Uterus (tissue), 4 donors: ENCODE measurements at regions of chr1 and their contacts with region 1.

Region 1: DNA sequence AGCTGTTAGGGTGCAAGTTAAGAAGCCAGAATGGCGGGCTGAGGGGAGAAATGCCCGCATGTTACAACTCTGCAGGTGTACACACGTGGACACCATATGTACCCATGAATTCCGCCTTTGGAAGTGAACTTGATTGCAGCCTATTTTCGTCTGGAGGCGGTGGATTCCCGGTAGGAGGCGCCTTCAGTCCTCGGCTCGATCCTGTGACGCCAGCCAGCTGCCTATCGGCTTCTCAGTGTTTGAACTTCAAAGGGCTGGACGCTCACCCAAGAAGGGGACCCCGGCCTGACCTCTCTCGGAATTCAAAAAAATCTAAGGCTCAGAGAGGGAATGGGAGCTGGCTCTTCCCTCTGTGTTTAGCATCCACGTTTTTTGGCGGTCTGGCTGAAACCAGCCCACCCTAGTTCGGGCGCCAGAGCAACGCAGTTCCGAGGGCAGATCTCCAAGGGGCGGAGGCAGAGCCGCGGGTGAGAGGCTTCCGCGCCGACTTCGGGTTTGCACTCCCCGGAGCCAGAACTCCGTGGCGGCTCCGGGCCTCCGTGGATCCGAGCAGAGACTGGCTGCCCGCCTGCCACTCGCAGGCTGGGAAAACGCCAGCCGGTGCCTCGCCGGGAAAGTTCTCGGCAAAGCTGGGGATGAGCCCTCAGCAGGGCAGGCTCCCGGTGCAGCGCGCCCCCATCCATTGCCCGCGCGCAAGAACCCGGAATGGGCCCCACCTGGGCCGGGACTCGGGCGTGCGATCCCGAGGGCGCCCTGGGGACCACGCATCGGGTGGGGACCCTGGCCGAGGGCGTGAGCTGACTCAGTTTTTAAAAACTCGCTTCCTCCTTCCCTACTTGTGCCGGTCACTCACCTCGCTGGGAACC is 996 bp upstream of the TMEM51 start:
- DNase-seq: peak; percentile 83 to 87
- H3K4me3 ChIP-seq: peak overlapping the region; percentile 58 to 89
- H3K27ac ChIP-seq: peak overlapping the region; percentile 69 to 76
- H3K4me1 ChIP-seq: peaks cover 0 to 5% of the 10 kb centered on the region in 2 donors
- H3K27me3 ChIP-seq: no peaks in the 10 kb centered on the region
- CTCF ChIP-seq: peak; percentile 68 to 80 (median 74)
- POLR2A ChIP-seq: peak in 1 of 2 donors; percentile 58

Region 2: GRCh38 chr1:14980621-14981218 is 171.8 kb before region 1 on chr1:
- intact Hi-C with region 1: no loop called
- DNase-seq: peak; percentile 25 to 28
- H3K4me3 ChIP-seq: no peak overlapping the region
- H3K27ac ChIP-seq: no peak overlapping the region
- H3K4me1 ChIP-seq: no peaks in the 10 kb centered on the region
- H3K27me3 ChIP-seq: no peaks in the 10 kb centered on the region
- CTCF ChIP-seq: no peak
- POLR2A ChIP-seq: no peak

Region 3: DNA sequence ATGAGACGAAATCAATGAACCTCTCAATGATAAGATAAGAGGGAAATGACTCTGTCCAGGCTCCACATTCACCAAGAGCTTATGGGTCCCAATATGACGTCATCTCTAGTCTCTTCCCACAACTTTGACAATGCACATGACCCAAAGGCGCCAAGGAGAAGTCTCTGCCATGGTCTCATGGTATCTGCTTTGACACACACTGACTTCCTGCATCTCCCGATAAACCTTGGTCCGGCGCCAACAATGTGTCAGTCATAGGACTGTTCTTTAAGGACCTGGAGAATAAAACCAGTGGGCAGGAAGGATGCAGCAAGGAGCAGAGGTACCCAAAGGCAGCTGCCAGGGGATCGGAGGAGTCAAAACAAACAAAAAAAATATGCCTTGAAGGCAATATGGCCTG is 45.9 kb before region 1 on chr1:
- intact Hi-C with region 1: no loop called
- DNase-seq: no peak
- H3K4me3 ChIP-seq: no peak overlapping the region
- H3K27ac ChIP-seq: no peak overlapping the region
- H3K4me1 ChIP-seq: no peaks in the 10 kb centered on the region
- H3K27me3 ChIP-seq: no peaks in the 10 kb centered on the region
- CTCF ChIP-seq: no peak
- POLR2A ChIP-seq: no peak

Region 4: GRCh38 chr1:15261155-15262002 is 108.8 kb after region 1 on chr1:
- intact Hi-C with region 1: loop called (anchors 10 kb)
- DNase-seq: peak in 1 of 2 donors; percentile 20
- H3K4me3 ChIP-seq: no peak overlapping the region
- H3K27ac ChIP-seq: no peak overlapping the region
- H3K4me1 ChIP-seq: no peaks in the 10 kb centered on the region
- H3K27me3 ChIP-seq: no peaks in the 10 kb centered on the region
- CTCF ChIP-seq: no peak
- POLR2A ChIP-seq: no peak